CD14-positive monocyte (primary cell): ENCODE measurements at regions of chr22 and their contacts with region 1.

Region 1: DNA sequence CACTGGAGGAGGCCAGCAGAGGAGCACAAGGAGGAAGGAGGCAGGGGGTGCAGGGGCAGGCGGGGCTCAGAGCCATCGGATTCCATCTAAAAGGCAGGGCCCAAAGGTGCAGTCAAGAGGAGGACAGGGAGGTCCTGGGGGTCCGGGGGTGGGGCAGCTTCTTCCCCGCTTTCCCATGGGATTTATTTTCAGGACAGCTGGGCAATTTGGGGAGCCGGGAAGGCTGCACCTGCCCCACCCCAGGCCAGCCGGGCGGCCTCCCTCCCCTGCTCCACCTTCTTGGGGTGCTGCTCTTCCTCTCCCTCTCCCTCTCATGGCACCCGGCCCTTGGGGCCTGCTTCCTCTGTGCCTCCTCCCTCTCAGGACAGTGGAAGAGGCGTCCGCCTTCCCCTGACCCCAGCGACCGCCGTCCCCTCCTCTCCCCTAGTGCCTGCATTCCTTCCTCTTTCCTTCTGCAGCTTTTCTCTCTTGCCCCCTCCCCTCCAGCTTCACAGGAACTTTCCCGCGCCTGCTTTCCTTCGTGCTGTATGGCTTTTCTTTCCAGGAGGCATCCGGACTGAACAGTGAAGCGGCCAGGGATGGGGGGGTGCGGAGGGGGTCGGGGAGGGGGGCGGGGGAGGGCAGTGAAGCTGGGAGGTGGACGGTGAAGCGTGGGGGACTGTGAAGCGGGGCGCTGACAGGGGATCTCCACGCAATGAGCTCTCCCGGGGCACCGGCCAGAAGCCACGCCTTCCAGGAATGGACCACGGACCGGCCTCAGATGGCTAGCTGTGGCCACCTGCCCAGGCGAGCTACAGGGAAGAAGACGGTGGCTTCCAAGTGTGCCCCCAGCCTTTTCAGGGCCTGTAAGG is 26.9 kb downstream of the APOBEC3H start:
- DNase-seq: no peak
- H3K4me3 ChIP-seq: no peak overlapping the region
- H3K4me3 Mint-ChIP-seq: peak overlapping the region in 1 of 2 donors; percentile 35
- H3K27ac ChIP-seq: no peak overlapping the region
- H3K27ac Mint-ChIP-seq: no peak overlapping the region
- H3K4me1 ChIP-seq: peaks cover 6 to 10% of the 10 kb centered on the region in 2 donors
- H3K4me1 Mint-ChIP-seq: peaks cover 9% of the 10 kb centered on the region
- H3K27me3 ChIP-seq: no peaks in the 10 kb centered on the region
- H3K27me3 Mint-ChIP-seq: peaks cover 2 to 5% (median 4%) of the 10 kb centered on the region in 3 donors
- CTCF ChIP-seq: no peak

Region 2: DNA sequence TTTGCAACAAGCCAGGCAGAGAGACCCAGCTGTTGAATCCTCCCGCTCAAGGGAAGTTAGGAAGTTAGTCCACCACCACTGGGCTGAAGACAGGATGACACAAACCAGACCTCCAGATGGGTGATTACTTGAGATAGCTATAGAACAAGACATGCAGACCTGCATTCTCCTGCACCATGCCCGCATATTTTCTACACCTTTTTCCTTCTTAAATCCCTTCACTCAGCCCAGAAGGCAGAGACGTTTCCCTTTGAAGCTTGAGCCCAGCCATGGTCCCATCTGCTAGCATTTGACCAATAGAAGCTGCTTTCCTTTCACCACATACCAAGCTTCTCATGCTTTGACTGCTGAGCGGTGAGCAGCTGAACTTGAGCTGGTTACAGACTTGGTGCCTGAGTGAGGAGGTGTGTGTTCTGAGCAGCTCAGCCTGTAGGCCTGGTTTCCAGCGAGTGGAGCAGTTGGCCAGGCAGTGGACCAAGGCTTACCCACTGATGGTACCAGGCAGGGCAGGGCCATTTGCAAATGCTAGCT is 222.8 kb before region 1 on chr22:
- intact Hi-C with region 1: loop called in 1 of 2 experiments (anchors 10 kb)
- DNase-seq: no peak
- H3K4me3 ChIP-seq: no peak overlapping the region
- H3K4me3 Mint-ChIP-seq: peak overlapping the region in 1 of 2 donors; percentile 9
- H3K27ac ChIP-seq: no peak overlapping the region
- H3K27ac Mint-ChIP-seq: no peak overlapping the region
- H3K4me1 ChIP-seq: peaks cover 0 to 9% of the 10 kb centered on the region in 2 donors
- H3K4me1 Mint-ChIP-seq: peaks cover 14% of the 10 kb centered on the region
- H3K27me3 ChIP-seq: peaks cover 2 to 4% of the 10 kb centered on the region in 2 donors
- H3K27me3 Mint-ChIP-seq: peaks cover 2 to 8% (median 2%) of the 10 kb centered on the region in 3 donors
- CTCF ChIP-seq: no peak

Region 3: GRCh38 chr22:39003165-39003638 is 120.8 kb before region 1 on chr22:
- intact Hi-C with region 1: loop called in 1 of 2 experiments (anchors 10 kb)
- DNase-seq: peak; percentile 82 to 86 (median 86)
- H3K4me3 ChIP-seq: no peak overlapping the region
- H3K4me3 Mint-ChIP-seq: no peak overlapping the region
- H3K27ac ChIP-seq: no peak overlapping the region
- H3K27ac Mint-ChIP-seq: peak overlapping the region in 4 of 7 donors; percentile 13 to 79 (median 43)
- H3K4me1 ChIP-seq: peaks cover 8 to 10% of the 10 kb centered on the region in 2 donors
- H3K4me1 Mint-ChIP-seq: peaks cover 14% of the 10 kb centered on the region
- H3K27me3 ChIP-seq: no peaks in the 10 kb centered on the region
- H3K27me3 Mint-ChIP-seq: peaks cover 13 to 20% (median 14%) of the 10 kb centered on the region in 3 donors
- CTCF ChIP-seq: peak; percentile 70